HepG2 (cell line): ENCODE measurements at regions of chr12 and their contacts with region 1.

Region 1: GRCh38 chr12:101830367-101831325 is at the start of gene GNPTAB:
- DNase-seq: peak; percentile 87
- ATAC-seq: peak; percentile 97
- H3K4me3 ChIP-seq: peak within 1 kb of the TSS; percentile 92 to 97 (median 94)
- H3K27ac ChIP-seq: peak within 1 kb of the TSS; percentile 44
- H3K4me1 ChIP-seq: peaks cover 26% of the 10 kb centered on the region
- H3K27me3 ChIP-seq: no peaks in the 10 kb centered on the region; a peak in 1 of 5 replicates
- CTCF ChIP-seq: peak; percentile 86
- EP300 ChIP-seq: no peak
- POLR2A ChIP-seq: no peak
- RAD21 ChIP-seq: peak; percentile 87
- total RNA-seq, gene GNPTAB: 19.4 and 23.0 TPM in 2 replicates

Region 2: GRCh38 chr12:101407436-101408345 is 423.0 kb before region 1 on chr12 and contains the start of gene ARL1:
- CTCF ChIA-PET with region 1: no interaction called
- POLR2A ChIA-PET with region 1: interaction called, 4 read pairs
- in situ Hi-C with region 1: loop called (anchors 10 kb)
- intact Hi-C with region 1: loop called (anchors 5 kb)
- DNase-seq: peak; percentile 79
- ATAC-seq: peak; percentile 94
- H3K4me3 ChIP-seq: peak within 1 kb of the TSS; percentile 71 to 93 (median 91)
- H3K27ac ChIP-seq: peak within 1 kb of the TSS; percentile 81
- H3K4me1 ChIP-seq: peaks cover 26% of the 10 kb centered on the region
- H3K27me3 ChIP-seq: no peaks in the 10 kb centered on the region; a peak in 1 of 5 replicates
- CTCF ChIP-seq: 0 out of 2 replicates have a peak, but pooled peaks have one; percentile 9
- EP300 ChIP-seq: peak in 1 of 2 experiments; percentile 66; a peak in 1 of 4 replicates
- POLR2A ChIP-seq: peak; percentile 76 to 92
- RAD21 ChIP-seq: 0 out of 2 replicates have a peak, but pooled peaks have one; percentile 8
- total RNA-seq, gene ARL1: 114 and 123 TPM in 2 replicates

Region 3: GRCh38 chr12:101414533-101415119 is 416.0 kb before region 1 on chr12:
- CTCF ChIA-PET with region 1: interaction called, 3 read pairs
- POLR2A ChIA-PET with region 1: interaction called, 4 read pairs
- in situ Hi-C with region 1: loop called (anchors 10 kb)
- intact Hi-C with region 1: loop called (anchors 5 kb)
- DNase-seq: peak; percentile 58
- ATAC-seq: 0 out of 3 replicates have a peak, but pooled peaks have one; percentile 47
- H3K4me3 ChIP-seq: no peak overlapping the region
- H3K27ac ChIP-seq: no peak overlapping the region
- H3K4me1 ChIP-seq: peaks cover 8% of the 10 kb centered on the region; the same call in 1 of the 2 replicates
- H3K27me3 ChIP-seq: no peaks in the 10 kb centered on the region
- CTCF ChIP-seq: peak; percentile 78
- EP300 ChIP-seq: no peak
- POLR2A ChIP-seq: no peak
- RAD21 ChIP-seq: peak; percentile 59; the same call in 1 of the 2 replicates

Region 4: GRCh38 chr12:101490286-101490920 is 340.2 kb before region 1 on chr12:
- CTCF ChIA-PET with region 1: no interaction called
- POLR2A ChIA-PET with region 1: no interaction called
- in situ Hi-C with region 1: no loop called
- intact Hi-C with region 1: loop called (anchors 1 kb)
- DNase-seq: peak; percentile 61
- ATAC-seq: peak; percentile 93
- H3K4me3 ChIP-seq: no peak overlapping the region
- H3K27ac ChIP-seq: no peak overlapping the region
- H3K4me1 ChIP-seq: peaks cover 10% of the 10 kb centered on the region
- H3K27me3 ChIP-seq: peaks cover 0 to 4% of the 10 kb centered on the region in 2 experiments; a peak in 1 of 5 replicates
- CTCF ChIP-seq: peak; percentile 80
- EP300 ChIP-seq: no peak
- POLR2A ChIP-seq: no peak
- RAD21 ChIP-seq: peak; percentile 70; the same call in 1 of the 2 replicates

Region 5: DNA sequence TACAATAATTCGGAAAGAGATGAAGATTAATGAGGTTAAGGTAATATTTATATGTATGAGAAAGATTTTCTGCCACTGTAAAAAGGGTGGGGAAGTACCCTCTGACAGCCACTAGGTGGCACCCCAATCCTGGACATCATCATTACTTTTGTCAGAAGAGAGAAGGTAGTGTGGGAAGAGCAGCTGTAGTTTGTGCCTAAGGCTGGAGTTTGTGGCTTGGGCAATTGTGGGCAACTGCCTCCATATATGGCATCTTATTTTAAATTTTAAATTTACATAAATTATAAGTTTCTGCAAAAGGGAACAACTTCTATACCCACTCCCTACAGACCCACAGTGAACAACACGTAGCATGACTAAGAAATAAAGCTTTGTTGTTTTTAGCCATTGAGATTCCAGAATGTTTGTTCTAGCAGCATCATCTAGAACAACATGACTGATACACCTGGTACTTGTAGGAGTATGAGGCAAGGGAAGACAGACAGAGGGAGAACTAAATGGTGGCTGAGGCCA is 56.9 kb before region 1 on chr12:
- CTCF ChIA-PET with region 1: interaction called, 20 read pairs
- POLR2A ChIA-PET with region 1: no interaction called
- in situ Hi-C with region 1: loop called (anchors 5 kb)
- intact Hi-C with region 1: loop called (anchors 2 kb)
- DNase-seq: peak; percentile 44
- ATAC-seq: peak; percentile 76
- H3K4me3 ChIP-seq: no peak overlapping the region
- H3K27ac ChIP-seq: no peak overlapping the region
- H3K4me1 ChIP-seq: peaks cover 12% of the 10 kb centered on the region
- H3K27me3 ChIP-seq: no peaks in the 10 kb centered on the region
- CTCF ChIP-seq: peak; percentile 85
- EP300 ChIP-seq: no peak
- POLR2A ChIP-seq: no peak
- RAD21 ChIP-seq: peak; percentile 73

Region 6: GRCh38 chr12:101792051-101792931 is 38.4 kb before region 1 on chr12:
- CTCF ChIA-PET with region 1: no interaction called
- POLR2A ChIA-PET with region 1: no interaction called
- in situ Hi-C with region 1: no loop called
- intact Hi-C with region 1: loop called (anchors 5 kb)
- DNase-seq: no peak
- ATAC-seq: peak; percentile 64
- H3K4me3 ChIP-seq: no peak overlapping the region
- H3K27ac ChIP-seq: no peak overlapping the region
- H3K4me1 ChIP-seq: peaks cover 5% of the 10 kb centered on the region; the same call in 1 of the 2 replicates
- H3K27me3 ChIP-seq: no peaks in the 10 kb centered on the region
- CTCF ChIP-seq: peak; percentile 43
- EP300 ChIP-seq: no peak
- POLR2A ChIP-seq: no peak
- RAD21 ChIP-seq: no peak